T-cell (primary cell): ENCODE measurements at regions of chr1 and their contacts with region 1.

Region 1: DNA sequence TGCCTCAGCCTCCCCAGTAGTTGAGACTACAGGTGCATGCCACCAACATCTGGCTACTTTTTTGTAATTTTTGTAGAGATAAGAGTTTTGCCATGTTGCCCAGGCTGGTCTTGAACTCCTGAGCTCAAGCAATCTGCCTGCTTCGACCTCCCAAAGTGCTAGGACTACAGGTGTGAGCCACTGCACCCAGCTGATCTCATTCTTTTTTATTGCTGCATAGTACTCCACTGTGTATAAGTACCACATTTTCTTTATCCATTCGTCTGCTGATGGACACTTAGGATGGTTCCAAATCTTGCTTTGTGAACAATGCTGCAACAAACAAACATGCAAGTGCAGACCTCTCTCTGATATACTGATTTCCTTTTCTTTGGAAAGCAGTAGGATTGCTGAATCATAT is 59.5 kb downstream of the UROD start:
- DNase-seq: no peak
- ATAC-seq: no peak
- H3K4me3 ChIP-seq: no peak overlapping the region
- H3K4me3 Mint-ChIP-seq: no peak overlapping the region
- H3K27ac ChIP-seq: no peak overlapping the region
- H3K27ac Mint-ChIP-seq: no peak overlapping the region
- H3K4me1 ChIP-seq: no peaks in the 10 kb centered on the region
- H3K4me1 Mint-ChIP-seq: peaks cover 0 to 3% (median 0%) of the 10 kb centered on the region in 3 donors
- H3K27me3 ChIP-seq: no peaks in the 10 kb centered on the region
- H3K27me3 Mint-ChIP-seq: peaks cover 0 to 3% of the 10 kb centered on the region in 2 donors

Region 2: DNA sequence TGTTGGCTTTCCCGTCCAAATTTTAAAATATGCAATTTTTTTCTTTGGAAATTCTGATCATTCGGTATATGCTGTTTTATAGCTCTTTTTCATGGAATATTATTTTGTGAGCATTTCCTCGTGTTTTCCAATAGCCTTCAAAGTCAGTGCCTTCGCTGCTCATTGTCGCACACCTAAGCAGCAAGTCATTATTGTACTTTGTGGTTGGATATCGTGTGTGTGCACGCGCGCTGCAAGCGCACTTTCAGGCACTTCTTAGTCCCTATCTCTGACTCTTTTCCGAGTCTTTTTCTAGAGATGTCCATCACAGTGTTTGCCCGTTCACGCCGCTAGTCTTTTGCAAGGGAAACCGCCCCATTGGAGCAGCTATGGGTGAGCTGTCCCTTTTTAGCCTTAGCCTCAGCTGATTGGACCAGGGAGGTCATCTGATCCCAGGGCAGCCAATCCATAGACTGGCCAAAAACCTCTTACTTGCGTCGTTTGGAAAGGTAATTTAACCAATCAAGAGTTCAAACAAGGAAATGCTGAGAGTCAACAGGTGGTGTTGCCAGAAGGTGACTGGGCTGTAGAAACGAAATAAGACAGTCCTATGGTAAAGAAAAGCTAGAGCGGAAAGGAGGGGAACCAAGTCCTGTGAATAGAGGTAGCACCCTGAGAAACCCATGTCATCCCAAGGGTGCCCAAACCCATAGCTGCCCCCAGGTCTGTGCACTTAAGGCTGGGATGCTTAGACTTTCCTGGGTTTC is 1617.1 kb before region 1 on chr1:
- CTCF ChIA-PET with region 1: no interaction called
- POLR2A ChIA-PET with region 1: interaction called in 1 of 2 experiments, 12 read pairs
- DNase-seq: peak in 34 of 35 experiments; percentile 25 to 75 (median 46)
- ATAC-seq: peak; percentile 57 to 80 (median 63)
- H3K4me3 ChIP-seq: peak overlapping the region; percentile 41 to 54
- H3K4me3 Mint-ChIP-seq: peak overlapping the region; percentile 83 to 88 (median 87)
- H3K27ac ChIP-seq: peak overlapping the region; percentile 27
- H3K27ac Mint-ChIP-seq: peak overlapping the region; percentile 88 to 89
- H3K4me1 ChIP-seq: peaks cover 0 to 21% of the 10 kb centered on the region in 2 experiments
- H3K4me1 Mint-ChIP-seq: peaks cover 17 to 23% (median 21%) of the 10 kb centered on the region in 3 donors
- H3K27me3 ChIP-seq: peaks cover 0 to 10% of the 10 kb centered on the region in 2 experiments
- H3K27me3 Mint-ChIP-seq: peaks cover 14% of the 10 kb centered on the region in 2 donors

Region 3: GRCh38 chr1:45084562-45084961 is 13.0 kb after region 1 on chr1:
- CTCF ChIA-PET with region 1: no interaction called
- POLR2A ChIA-PET with region 1: no interaction called
- DNase-seq: no peak
- ATAC-seq: no peak
- H3K4me3 ChIP-seq: no peak overlapping the region
- H3K4me3 Mint-ChIP-seq: no peak overlapping the region
- H3K27ac ChIP-seq: no peak overlapping the region
- H3K27ac Mint-ChIP-seq: no peak overlapping the region
- H3K4me1 ChIP-seq: peaks cover 0 to 1% of the 10 kb centered on the region in 2 experiments
- H3K4me1 Mint-ChIP-seq: peaks cover 0 to 2% (median 0%) of the 10 kb centered on the region in 3 donors
- H3K27me3 ChIP-seq: no peaks in the 10 kb centered on the region
- H3K27me3 Mint-ChIP-seq: no peaks in the 10 kb centered on the region